ENCODE measurements at regions of chr1 and their contacts with region 1.

Region 1: GRCh38 chr1:236142253-236143103 is at the start of gene GPR137B:
- DNase-seq: peak; percentile 89
- CTCF ChIP-seq: no peak

Region 2: DNA sequence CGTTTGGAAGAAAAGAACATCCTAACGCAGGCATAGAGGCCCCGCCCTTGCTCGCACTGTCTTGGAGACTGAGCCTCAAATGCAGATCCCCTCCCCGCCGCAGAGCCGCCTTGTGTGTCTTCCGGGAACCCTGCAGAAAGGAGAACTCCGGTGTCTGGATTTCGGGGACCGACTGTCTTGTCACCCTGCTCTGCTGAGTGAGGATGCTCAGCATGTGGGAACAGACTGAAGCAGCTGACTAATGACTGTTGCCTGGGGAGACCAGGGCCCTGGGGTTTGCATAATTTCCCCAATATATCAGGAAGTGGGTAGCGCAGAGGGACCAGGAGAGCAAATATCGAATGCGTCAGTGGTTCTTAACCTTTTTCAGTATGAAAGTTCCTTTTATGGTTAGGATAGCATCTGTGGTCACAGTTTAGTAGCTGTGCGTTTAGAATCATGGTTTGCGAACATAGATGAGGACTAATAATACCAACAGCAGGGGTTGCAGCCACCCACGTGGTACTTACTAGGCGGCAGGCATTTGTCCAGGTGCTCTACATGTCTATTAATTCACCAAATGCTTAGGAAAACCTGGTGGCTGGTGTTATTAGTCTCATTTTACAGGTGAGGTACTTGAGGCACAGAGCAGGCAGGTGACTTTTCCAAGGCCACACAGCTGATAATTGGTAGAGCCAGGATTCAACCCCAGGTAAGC is 14.2 kb after region 1 on chr1:
- CTCF ChIA-PET with region 1: interaction called, 15 read pairs
- POLR2A ChIA-PET with region 1: interaction called, 4 read pairs
- DNase-seq: peak; percentile 89
- CTCF ChIP-seq: no peak